H1 (cell line): ENCODE measurements at regions of chr5 and their contacts with region 1.

Region 1: GRCh38 chr5:97242341-97242740 is 59.3 kb upstream of the RIOK2 start:
- DNase-seq: no peak
- H3K4me3 ChIP-seq: no peak overlapping the region
- H3K27ac ChIP-seq: no peak overlapping the region
- H3K4me1 ChIP-seq: no peaks in the 10 kb centered on the region
- H3K27me3 ChIP-seq: no peaks in the 10 kb centered on the region
- CTCF ChIP-seq: no peak
- EP300 ChIP-seq: no peak
- POLR2A ChIP-seq: no peak
- RAD21 ChIP-seq: no peak

Region 2: GRCh38 chr5:97231025-97231636 is 11.2 kb before region 1 on chr5:
- CTCF ChIA-PET with region 1: interaction called, 11 read pairs
- POLR2A ChIA-PET with region 1: no interaction called
- DNase-seq: no peak
- H3K4me3 ChIP-seq: no peak overlapping the region
- H3K27ac ChIP-seq: no peak overlapping the region
- H3K4me1 ChIP-seq: no peaks in the 10 kb centered on the region
- H3K27me3 ChIP-seq: no peaks in the 10 kb centered on the region
- CTCF ChIP-seq: peak in 2 of 3 experiments; percentile 56 to 63; a peak in 3 of 4 replicates
- EP300 ChIP-seq: no peak
- POLR2A ChIP-seq: no peak
- RAD21 ChIP-seq: peak; percentile 78 to 79